Activated naive CD4-positive, alpha-beta T cell treated with anti-CD3 and anti-CD28 coated beads for 36 hours (primary cell): ENCODE measurements at regions of chr3 and their contacts with region 1.

Region 1: GRCh38 chr3:40317061-40317855 is 7.8 kb downstream of the EIF1B start:
- DNase-seq: peak; percentile 55
- H3K4me3 Mint-ChIP-seq: no peak overlapping the region
- H3K27ac Mint-ChIP-seq: no peak overlapping the region
- H3K4me1 Mint-ChIP-seq: peaks cover 7% of the 10 kb centered on the region
- H3K27me3 Mint-ChIP-seq: no peaks in the 10 kb centered on the region

Region 2: GRCh38 chr3:39707314-39707909 is 609.8 kb before region 1 on chr3:
- CTCF ChIA-PET with region 1: no interaction called
- intact Hi-C with region 1: loop called (anchors 1 kb)
- DNase-seq: no peak
- H3K4me3 Mint-ChIP-seq: no peak overlapping the region
- H3K27ac Mint-ChIP-seq: no peak overlapping the region
- H3K4me1 Mint-ChIP-seq: no peaks in the 10 kb centered on the region
- H3K27me3 Mint-ChIP-seq: peaks cover 3% of the 10 kb centered on the region

Region 3: GRCh38 chr3:39809995-39810595 is 507.2 kb before region 1 on chr3:
- CTCF ChIA-PET with region 1: no interaction called
- intact Hi-C with region 1: loop called (anchors 2 kb)
- DNase-seq: no peak
- H3K4me3 Mint-ChIP-seq: peak overlapping the region; percentile 59
- H3K27ac Mint-ChIP-seq: no peak overlapping the region
- H3K4me1 Mint-ChIP-seq: peaks cover 16% of the 10 kb centered on the region
- H3K27me3 Mint-ChIP-seq: peaks cover 57% of the 10 kb centered on the region

Region 4: DNA sequence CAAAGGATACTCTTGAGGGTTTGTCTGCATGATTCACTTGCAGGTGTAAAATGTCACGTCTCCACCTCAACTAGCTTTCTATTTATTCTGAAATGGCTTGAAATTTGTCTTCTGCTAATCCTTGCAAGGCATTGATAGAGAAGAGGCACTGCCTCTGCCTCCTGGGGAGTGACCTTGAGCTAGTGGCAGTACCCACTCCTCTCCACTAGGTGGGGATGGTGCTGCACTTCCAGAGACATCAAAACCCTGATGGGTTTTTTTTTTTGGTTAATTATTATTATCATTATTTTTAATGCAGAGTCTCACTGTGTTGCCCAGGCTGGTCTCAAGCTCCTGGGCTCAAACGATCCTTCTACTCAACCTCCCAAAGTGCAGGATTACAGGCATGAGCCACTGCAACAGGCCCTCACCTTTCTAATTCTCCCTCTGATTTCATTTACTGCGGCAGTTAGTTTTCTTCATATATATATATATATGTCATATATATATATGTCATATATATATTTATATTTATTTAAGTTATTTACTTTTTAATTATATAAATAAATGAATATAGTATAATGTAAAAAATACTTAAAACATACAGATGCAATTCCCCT is 125.3 kb before region 1 on chr3:
- CTCF ChIA-PET with region 1: interaction called, 133 read pairs
- intact Hi-C with region 1: loop called (anchors 1 kb)
- DNase-seq: peak; percentile 73
- H3K4me3 Mint-ChIP-seq: no peak overlapping the region
- H3K27ac Mint-ChIP-seq: no peak overlapping the region
- H3K4me1 Mint-ChIP-seq: no peaks in the 10 kb centered on the region
- H3K27me3 Mint-ChIP-seq: no peaks in the 10 kb centered on the region

Region 5: GRCh38 chr3:40196966-40197365 is 120.3 kb before region 1 on chr3:
- CTCF ChIA-PET with region 1: interaction called, 133 read pairs
- intact Hi-C with region 1: loop called (anchors 1 kb)
- DNase-seq: no peak
- H3K4me3 Mint-ChIP-seq: no peak overlapping the region
- H3K27ac Mint-ChIP-seq: no peak overlapping the region
- H3K4me1 Mint-ChIP-seq: no peaks in the 10 kb centered on the region
- H3K27me3 Mint-ChIP-seq: no peaks in the 10 kb centered on the region

Region 6: GRCh38 chr3:40355410-40355809 is 38.2 kb after region 1 on chr3:
- CTCF ChIA-PET with region 1: no interaction called
- intact Hi-C with region 1: no loop called
- DNase-seq: no peak
- H3K4me3 Mint-ChIP-seq: no peak overlapping the region
- H3K27ac Mint-ChIP-seq: no peak overlapping the region
- H3K4me1 Mint-ChIP-seq: no peaks in the 10 kb centered on the region
- H3K27me3 Mint-ChIP-seq: peaks cover 16% of the 10 kb centered on the region